ENCODE measurements at regions of chr7 and their contacts with region 1.

Region 1: GRCh38 chr7:25139536-25139935 is 14.5 kb upstream of the CYCS start:
- DNase-seq: no peak
- ATAC-seq: no peak
- H3K4me3 Mint-ChIP-seq: no peak overlapping the region
- H3K27ac Mint-ChIP-seq: no peak overlapping the region
- H3K4me1 Mint-ChIP-seq: no peaks in the 10 kb centered on the region
- H3K27me3 Mint-ChIP-seq: no peaks in the 10 kb centered on the region
- CTCF ChIP-seq: no peak

Region 2: DNA sequence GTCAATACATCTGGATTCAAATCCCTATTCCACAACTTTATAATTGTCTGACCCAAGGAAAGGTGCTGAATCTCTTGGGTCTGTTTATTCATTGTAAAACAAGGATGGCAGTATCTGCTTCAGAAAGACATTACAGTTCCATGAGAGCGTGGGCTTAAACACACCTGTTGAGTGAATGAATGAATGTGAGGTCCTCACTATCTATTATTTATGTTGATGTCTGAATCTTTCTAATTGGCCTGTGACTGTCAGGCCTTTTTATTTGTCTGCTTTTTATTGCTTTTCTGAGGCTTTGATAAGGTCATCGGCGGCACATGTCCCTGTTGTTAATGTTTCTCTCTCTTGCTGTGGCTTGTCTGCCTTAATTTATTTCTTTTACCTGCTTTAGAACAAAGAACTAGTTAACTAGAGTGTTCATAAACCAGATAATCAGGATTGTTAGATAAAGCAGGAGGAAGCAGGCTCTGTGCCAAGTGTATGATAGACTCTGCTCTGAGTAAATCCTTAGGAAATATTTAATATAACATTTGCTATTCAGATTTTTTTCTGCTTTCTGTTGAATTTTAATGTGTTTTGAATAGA is 27.8 kb after region 1 on chr7:
- CTCF ChIA-PET with region 1: no interaction called
- POLR2A ChIA-PET with region 1: no interaction called
- intact Hi-C with region 1: loop called (anchors 1 kb)
- DNase-seq: no peak
- ATAC-seq: no peak
- H3K4me3 Mint-ChIP-seq: no peak overlapping the region
- H3K27ac Mint-ChIP-seq: no peak overlapping the region
- H3K4me1 Mint-ChIP-seq: peaks cover 2% of the 10 kb centered on the region
- H3K27me3 Mint-ChIP-seq: no peaks in the 10 kb centered on the region
- CTCF ChIP-seq: no peak

Region 3: GRCh38 chr7:25288556-25289307 is 149.2 kb after region 1 on chr7:
- CTCF ChIA-PET with region 1: no interaction called
- POLR2A ChIA-PET with region 1: no interaction called
- intact Hi-C with region 1: no loop called
- DNase-seq: no peak
- ATAC-seq: no peak
- H3K4me3 Mint-ChIP-seq: no peak overlapping the region
- H3K27ac Mint-ChIP-seq: no peak overlapping the region
- H3K4me1 Mint-ChIP-seq: no peaks in the 10 kb centered on the region
- H3K27me3 Mint-ChIP-seq: peaks cover 7% of the 10 kb centered on the region
- CTCF ChIP-seq: no peak

Measured in activated B cell treated with CpG ODN at 0.5 μM for 24 hours (primary cell).